ENCODE measurements at regions of chr13 and their contacts with region 1.

Region 1: GRCh38 chr13:29923554-29924481 is 73.4 kb upstream of the UBL3 start:
- DNase-seq: peak; percentile 16 to 60
- ATAC-seq: peak; percentile 58 to 79
- H3K4me3 ChIP-seq: no peak overlapping the region
- H3K27ac ChIP-seq: peak overlapping the region; percentile 49 to 73 (median 50)
- H3K4me1 ChIP-seq: peaks cover 21 to 26% of the 10 kb centered on the region in 2 donors
- H3K27me3 ChIP-seq: no peaks in the 10 kb centered on the region
- CTCF ChIP-seq: peak; percentile 39 to 74 (median 58)
- POLR2A ChIP-seq: no peak

Region 2: DNA sequence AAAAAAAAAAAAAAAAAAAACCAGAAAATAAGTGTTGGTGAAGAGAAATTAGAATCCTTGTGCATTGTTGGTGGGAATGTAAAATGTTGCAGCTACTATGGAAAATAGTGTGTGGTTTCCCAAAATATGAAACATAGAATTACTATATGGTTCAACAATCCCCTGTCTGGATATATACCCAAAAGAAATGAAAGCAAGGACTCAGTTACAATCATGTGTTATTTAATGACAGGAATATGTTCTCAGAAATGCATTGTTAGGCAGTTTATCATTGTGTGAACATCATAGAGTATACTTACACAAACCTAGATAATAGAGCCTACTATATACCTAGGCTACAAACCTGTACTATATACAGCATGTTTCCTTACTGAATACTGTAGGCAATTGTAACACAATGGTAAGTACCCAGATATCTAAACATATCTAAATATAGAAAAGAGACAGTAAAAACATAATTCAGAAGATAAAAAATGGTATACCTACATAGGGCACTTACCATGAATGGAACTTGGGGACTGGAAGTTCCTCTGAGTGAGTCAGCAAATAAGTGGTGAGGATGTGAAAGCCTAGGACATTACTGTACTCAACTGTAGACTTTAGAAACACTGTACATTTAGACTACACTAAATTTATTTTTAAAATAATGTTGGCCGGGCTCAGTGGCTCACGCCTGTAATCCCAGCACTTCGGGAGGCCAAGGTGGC is 302.6 kb before region 1 on chr13:
- in situ Hi-C with region 1: no loop called
- intact Hi-C with region 1: no loop called
- DNase-seq: no peak
- ATAC-seq: no peak
- H3K4me3 ChIP-seq: no peak overlapping the region
- H3K27ac ChIP-seq: no peak overlapping the region
- H3K4me1 ChIP-seq: no peaks in the 10 kb centered on the region
- H3K27me3 ChIP-seq: no peaks in the 10 kb centered on the region
- CTCF ChIP-seq: no peak
- POLR2A ChIP-seq: no peak

Region 3: GRCh38 chr13:29771247-29771646 is 152.6 kb before region 1 on chr13:
- in situ Hi-C with region 1: no loop called
- intact Hi-C with region 1: loop called (anchors 2 kb)
- DNase-seq: no peak
- ATAC-seq: no peak
- H3K4me3 ChIP-seq: no peak overlapping the region
- H3K27ac ChIP-seq: no peak overlapping the region
- H3K4me1 ChIP-seq: no peaks in the 10 kb centered on the region
- H3K27me3 ChIP-seq: no peaks in the 10 kb centered on the region
- CTCF ChIP-seq: peak; percentile 28 to 60 (median 44)
- POLR2A ChIP-seq: no peak

Measured in gastrocnemius medialis (tissue), 4 donors.